ENCODE measurements at regions of chr5 and their contacts with region 1.

Region 1: GRCh38 chr5:141313711-141314110 is 6.9 kb downstream of the TAF7 start:
- DNase-seq: no peak

Region 2: GRCh38 chr5:141199359-141200235 is 114.1 kb before region 1 on chr5 and contains the start of gene PCDHB11:
- intact Hi-C with region 1: no loop called
- DNase-seq: no peak
- total RNA-seq, gene PCDHB11: 1.9 TPM

Region 3: DNA sequence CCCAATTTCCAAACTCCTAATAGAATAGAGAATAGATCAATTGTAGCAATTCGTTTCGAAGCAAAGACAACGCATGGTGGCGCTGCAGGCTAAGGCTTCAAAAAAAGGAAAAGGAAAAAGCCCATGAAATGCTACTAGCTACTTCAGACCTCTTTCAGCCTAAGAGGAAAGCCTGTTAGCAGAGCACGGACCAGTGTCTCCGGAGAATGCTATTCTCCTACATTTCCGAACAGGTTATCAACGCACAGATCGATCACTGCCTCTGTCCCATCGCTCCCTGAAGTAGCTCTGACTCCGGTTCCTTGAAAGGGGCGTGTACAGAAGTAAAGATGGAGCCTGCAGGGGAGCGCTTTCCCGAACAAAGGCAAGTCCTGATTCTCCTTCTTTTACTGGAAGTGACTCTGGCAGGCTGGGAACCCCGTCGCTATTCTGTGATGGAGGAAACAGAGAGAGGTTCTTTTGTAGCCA is 68.4 kb before region 1 on chr5 and contains the start of gene PCDHB15:
- intact Hi-C with region 1: loop called (anchors 10 kb)
- DNase-seq: no peak
- total RNA-seq, gene PCDHB15: 9.9 TPM